Activated naive CD8-positive, alpha-beta T cell treated with anti-CD3 and anti-CD28 coated beads, Interleukin-2, amount 10 ng/mL, durations not matched to agents 7 days and 5 days (primary cell): ENCODE measurements at regions of chr6 and their contacts with region 1.

Region 1: DNA sequence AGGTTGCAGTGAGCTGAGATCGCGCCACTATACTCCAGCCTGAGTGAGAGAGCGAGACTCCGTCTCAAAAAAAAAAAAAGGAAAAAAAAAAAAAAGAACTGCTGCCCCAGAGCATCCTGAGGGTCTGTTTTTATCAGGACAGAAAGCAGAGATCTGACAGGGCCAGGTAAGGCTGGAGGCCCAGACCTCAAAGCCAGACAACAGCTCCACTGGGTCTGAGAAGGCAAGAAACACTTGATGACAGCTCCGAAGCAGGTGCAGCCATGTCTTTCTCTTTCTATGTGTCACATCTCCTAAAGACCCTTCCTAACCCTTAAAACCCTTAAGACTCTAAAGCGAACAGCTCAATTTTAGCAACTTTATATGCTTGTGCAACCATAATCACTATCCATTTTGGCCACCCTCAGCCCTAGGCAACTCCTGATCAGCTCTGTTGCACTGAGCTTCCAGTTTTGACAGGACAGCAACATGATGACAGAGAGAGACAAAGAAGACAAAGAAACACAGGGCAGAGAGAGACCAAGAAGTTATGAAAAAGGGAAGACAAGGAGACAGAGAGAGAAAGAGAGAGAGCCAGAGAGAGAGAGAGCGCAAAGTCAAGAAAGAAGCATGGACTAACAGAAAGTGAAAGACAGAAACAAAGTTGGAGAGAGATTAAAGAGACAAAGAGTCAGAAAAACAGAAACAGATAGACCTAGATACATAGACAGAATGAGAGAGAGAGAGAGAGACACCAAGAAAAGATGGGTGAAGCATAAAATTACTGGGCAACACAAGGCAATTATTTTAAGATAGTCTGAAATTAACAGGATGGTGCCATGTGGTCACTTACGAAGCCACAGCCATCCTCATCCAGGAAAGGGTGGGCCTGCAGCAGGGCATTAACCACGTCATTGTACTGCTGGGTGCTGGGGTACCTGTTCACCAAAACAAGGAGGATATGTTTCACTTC is 39.2 kb downstream of the SAMD3 start:
- DNase-seq: peak; percentile 37
- ATAC-seq: peak; percentile 91
- H3K4me3 Mint-ChIP-seq: peak overlapping the region; percentile 80
- H3K27ac Mint-ChIP-seq: peak overlapping the region; percentile 97
- H3K4me1 Mint-ChIP-seq: peaks cover 32% of the 10 kb centered on the region
- H3K27me3 Mint-ChIP-seq: no peaks in the 10 kb centered on the region

Region 2: DNA sequence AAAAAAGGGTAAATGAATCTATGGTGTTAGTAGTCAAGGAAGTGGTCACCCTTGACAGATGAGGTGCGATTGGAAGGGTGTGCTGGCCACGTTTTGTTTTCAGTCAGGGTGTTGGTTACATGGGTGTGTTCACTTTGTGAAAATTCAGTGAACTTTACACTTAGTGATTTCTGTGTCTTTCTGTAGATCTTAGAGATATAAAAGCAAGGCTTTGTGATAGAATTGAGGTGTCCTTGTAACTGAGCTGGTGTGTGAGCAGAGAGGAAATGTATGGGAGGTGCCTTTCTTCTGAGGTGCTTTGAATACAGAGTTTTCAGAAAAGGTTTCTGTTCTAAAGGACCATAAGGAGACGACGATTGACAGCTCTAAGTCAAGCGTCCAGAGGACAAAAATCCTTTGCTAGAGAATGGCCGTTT is 51.3 kb before region 1 on chr6:
- POLR2A ChIA-PET with region 1: interaction called, 10 read pairs
- DNase-seq: peak; percentile 41
- ATAC-seq: peak; percentile 92
- H3K4me3 Mint-ChIP-seq: peak overlapping the region; percentile 74
- H3K27ac Mint-ChIP-seq: peak overlapping the region; percentile 94
- H3K4me1 Mint-ChIP-seq: peaks cover 51% of the 10 kb centered on the region
- H3K27me3 Mint-ChIP-seq: no peaks in the 10 kb centered on the region